Ascending aorta (tissue), 2 donors: ENCODE measurements at regions of chr22 and their contacts with region 1.

Region 1: DNA sequence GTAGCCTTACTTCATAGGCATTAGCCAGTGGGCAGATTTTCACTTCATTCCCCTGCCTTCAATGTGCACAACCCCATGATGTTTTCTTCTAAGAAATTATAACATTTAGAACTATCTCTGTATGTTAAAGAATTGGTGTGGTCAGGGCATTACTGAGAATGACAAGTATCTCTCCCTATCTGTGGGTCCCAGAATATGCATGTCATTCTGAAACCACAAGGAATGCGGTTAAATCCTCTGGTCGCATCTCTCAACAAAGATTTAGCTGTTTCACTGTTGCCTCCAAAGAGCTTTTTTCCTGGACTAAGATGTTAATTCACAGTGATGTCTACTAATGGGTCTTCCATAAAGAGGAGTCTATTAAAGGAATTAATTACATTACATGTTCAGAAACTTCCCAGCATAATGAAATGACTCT is 62.7 kb downstream of the LIF start:
- DNase-seq: no peak
- H3K4me3 ChIP-seq: no peak overlapping the region
- H3K27ac ChIP-seq: no peak overlapping the region
- H3K4me1 ChIP-seq: no peaks in the 10 kb centered on the region
- H3K27me3 ChIP-seq: no peaks in the 10 kb centered on the region
- CTCF ChIP-seq: no peak

Region 2: DNA sequence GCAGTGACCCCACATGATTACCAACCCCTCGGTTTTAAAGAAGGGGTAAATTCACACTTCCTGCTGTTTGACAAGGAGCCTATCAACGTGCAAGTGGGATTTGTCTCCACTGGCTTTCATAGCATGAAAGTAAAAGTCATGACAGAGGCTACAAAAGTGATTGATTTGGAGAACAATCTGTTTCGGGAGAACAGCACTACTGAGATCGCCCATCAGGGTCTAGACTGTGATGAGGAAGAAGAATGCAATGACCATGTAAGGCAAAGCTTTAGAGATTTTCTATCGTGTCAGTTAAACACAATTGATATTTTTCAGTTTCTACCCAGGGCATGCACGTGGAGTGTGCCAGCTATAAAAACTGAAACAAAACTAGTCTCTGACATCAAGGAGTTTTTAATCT is 61.9 kb before region 1 on chr22:
- intact Hi-C with region 1: loop called (anchors 5 kb)
- DNase-seq: no peak
- H3K4me3 ChIP-seq: no peak overlapping the region
- H3K27ac ChIP-seq: no peak overlapping the region
- H3K4me1 ChIP-seq: no peaks in the 10 kb centered on the region
- H3K27me3 ChIP-seq: no peaks in the 10 kb centered on the region
- CTCF ChIP-seq: no peak

Region 3: DNA sequence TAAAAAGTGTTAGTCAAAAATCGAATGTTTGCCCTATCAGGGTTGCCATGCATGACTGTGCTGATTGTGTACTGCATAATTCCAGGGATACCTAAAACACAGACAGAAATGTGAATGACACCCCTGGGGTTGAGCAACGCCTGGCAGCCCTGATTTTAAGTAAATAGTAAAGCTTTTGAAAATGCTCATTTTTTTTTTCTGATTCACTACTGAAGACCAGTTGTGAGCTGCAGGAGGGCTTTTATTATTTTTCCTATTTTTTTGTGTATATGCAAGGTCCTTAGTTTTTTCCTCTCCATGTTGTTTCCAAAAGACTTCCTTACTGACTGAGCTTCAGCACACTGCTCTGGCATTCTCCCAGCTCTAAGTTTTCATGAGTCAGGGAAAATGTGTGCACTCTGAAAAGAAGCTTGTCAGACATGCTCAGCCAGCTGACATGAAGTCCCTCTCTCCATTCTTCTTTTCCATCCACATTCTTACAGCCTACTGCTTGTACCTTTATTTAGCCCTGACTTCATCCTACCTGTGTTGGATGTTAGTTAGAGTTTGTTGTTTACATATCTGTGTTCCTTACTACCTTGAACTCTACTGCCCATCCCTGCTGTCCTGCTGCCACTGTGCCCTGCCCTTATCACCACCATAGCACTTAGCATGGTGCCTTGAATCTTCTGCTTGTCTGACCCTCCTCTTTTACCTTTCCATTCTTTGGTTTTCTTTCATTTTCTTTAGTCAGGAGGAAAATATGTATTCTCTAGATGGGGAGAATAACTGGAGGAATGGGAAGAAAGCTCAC is 24.1 kb before region 1 on chr22:
- intact Hi-C with region 1: no loop called
- DNase-seq: no peak
- H3K4me3 ChIP-seq: no peak overlapping the region
- H3K27ac ChIP-seq: no peak overlapping the region
- H3K4me1 ChIP-seq: no peaks in the 10 kb centered on the region
- H3K27me3 ChIP-seq: no peaks in the 10 kb centered on the region
- CTCF ChIP-seq: no peak

Region 4: DNA sequence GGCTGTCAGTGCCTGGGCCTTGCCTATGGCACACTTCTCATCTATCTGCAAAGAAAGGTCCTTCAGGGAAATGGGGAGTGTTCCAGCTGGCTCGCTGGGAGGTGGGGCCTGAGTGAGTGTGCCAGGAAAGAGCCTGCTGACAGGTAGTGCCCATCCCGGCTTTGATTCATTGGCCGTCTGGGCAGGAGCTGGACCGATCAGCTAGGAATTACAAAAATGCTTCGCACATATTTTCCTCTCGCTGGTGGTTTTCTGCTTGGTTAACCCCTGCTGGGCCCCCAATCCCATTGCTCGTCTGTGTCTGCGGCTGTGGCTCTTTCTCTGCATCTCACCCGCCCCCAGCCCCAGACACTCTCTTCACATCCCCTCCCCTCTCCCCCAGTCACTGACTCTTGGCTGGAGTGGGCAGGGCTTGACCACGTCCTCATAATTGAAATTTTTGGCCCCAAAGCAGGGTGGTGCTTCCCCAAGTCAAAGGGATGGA is 51.9 kb after region 1 on chr22:
- intact Hi-C with region 1: loop called (anchors 10 kb)
- DNase-seq: no peak
- H3K4me3 ChIP-seq: no peak overlapping the region
- H3K27ac ChIP-seq: no peak overlapping the region
- H3K4me1 ChIP-seq: no peaks in the 10 kb centered on the region
- H3K27me3 ChIP-seq: no peaks in the 10 kb centered on the region
- CTCF ChIP-seq: no peak

Region 5: GRCh38 chr22:30326706-30327362 is 143.0 kb after region 1 on chr22 and contains the start of gene TBC1D10A:
- intact Hi-C with region 1: no loop called
- DNase-seq: peak; percentile 80 to 95
- H3K4me3 ChIP-seq: peak within 1 kb of the TSS; percentile 95 to 100
- H3K27ac ChIP-seq: peak within 1 kb of the TSS; percentile 94 to 95
- H3K4me1 ChIP-seq: peaks cover 10 to 39% of the 10 kb centered on the region in 2 donors
- H3K27me3 ChIP-seq: no peaks in the 10 kb centered on the region
- CTCF ChIP-seq: no peak
- total RNA-seq, gene TBC1D10A: 107 TPM